ENCODE measurements at regions of chr20 and their contacts with region 1.

Region 1: DNA sequence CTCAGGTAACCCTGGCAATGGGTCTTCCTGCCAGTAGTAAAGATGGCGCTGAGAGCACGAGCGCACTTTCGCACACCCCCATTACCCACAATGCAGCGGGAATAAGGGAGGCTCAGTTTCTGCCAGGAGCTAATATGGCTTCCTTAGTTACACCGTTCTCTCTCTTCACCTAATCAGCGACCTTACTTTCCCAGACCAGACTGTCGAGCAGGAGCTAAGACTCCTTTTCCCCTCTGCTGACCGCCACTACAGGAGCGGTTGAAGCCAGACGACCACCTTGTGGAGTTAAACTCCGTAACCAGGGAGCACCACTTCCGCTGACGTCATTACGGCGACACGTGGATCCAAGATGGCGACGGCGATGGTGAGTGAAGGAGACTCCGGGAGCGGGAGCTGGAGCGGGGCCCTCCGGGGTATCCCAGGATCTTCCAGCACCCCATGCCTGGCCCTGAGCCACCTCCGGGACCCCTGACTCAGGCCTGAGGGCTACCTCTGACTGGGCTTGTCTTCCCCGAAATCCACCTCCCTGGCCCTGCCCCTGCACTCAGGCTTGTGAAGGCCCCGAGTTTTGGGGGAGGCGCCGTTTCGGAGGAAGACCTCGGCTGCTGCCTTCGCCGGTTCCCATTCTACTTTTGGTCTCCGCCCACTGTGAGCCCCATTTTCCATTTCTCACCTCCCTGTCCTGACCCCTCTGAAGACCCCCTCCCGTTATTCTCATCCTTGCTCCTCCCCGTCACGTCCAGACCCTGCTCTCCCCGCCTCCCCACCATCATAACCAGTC is at the start of gene TM9SF4:
- DNase-seq: peak; percentile 87 to 89
- H3K4me3 ChIP-seq: peak within 1 kb of the TSS; percentile 69 to 79 (median 72)
- H3K27ac ChIP-seq: peak within 1 kb of the TSS; percentile 99 to 100 (median 99)
- H3K4me1 ChIP-seq: peaks cover 9 to 11% of the 10 kb centered on the region in 2 donors
- H3K27me3 ChIP-seq: no peaks in the 10 kb centered on the region
- CTCF ChIP-seq: no peak
- POLR2A ChIP-seq: peak in 1 of 2 donors; percentile 60
- total RNA-seq, gene TM9SF4: 28.8 to 46.0 (median 38.0) TPM

Region 2: DNA sequence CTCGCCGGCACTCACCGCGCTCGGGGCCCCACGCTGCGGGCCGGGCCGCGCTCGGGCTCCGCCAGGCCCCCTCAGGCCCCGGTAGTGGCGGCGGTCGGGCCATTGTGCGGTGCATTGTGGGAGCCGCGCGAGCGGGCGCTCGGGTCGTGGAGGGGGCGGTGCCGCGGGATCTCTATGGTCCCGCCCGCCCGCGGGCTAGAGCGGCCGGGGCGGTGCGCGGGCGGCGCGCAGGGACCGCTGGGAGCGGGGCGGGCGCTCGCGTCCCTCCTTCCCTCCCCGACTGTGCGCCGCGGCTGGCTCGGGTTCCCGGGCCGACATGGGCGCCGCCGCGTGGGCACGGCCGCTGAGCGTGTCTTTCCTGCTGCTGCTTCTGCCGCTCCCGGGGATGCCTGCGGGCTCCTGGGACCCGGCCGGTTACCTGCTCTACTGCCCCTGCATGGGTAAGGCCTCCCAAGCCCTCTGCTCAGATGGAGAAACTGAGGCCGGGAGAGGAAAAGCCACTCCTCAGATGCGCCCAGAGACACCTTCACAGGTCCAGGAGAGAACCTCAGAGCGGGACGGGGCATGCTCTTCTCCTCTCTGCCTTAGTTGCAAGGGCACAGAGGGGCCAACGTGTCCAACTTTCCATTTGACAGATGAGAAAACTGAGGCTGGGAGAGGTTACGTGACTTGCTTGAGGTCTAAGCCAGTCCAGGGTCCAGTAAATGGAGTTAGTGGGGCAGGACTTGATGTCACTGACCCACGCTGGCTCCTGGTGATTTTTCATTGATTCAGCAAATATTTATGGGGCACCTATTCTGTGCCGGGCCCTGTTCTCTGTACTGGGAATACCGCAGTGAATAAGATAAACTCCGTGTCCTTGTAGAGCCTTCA is 98.3 kb after region 1 on chr20 and contains the starts of genes PLAGL2 and POFUT1:
- intact Hi-C with region 1: loop called (anchors 10 kb)
- DNase-seq: peak; percentile 88 to 90
- H3K4me3 ChIP-seq: peak within 1 kb of the TSS; percentile 82 to 90 (median 84)
- H3K27ac ChIP-seq: peak within 1 kb of the TSS; percentile 79 to 90 (median 87)
- H3K4me1 ChIP-seq: peaks cover 42 to 51% of the 10 kb centered on the region in 2 donors
- H3K27me3 ChIP-seq: no peaks in the 10 kb centered on the region
- CTCF ChIP-seq: peak in 3 of 6 experiments; percentile 12 to 37 (median 27)
- POLR2A ChIP-seq: peak in 1 of 2 donors; percentile 88
- total RNA-seq, gene PLAGL2: 6.5 to 11.7 (median 7.3) TPM
- total RNA-seq, gene POFUT1: 35.1 to 40.5 (median 38.5) TPM

Measured in thyroid gland (tissue), 4 donors.